Activated T-helper 1 cell treated with anti-CD3 and anti-CD28 coated beads, Interleukin-12 subunit alpha, Interleukin-12 subunit beta, Interleukin-2, Interleukin-4 antibody, amounts not matched to agents 30 ng/mL and 10 ng/mL and 1 ng/mL, durations not matched to agents 14 hours and 24 hours and 36 hours (primary cell): ENCODE measurements at regions of chr1 and their contacts with region 1.

Region 1: GRCh38 chr1:44730741-44731512 is at the start of gene RNU5D-1:
- DNase-seq: peak; percentile 87
- H3K4me3 Mint-ChIP-seq: peak within 1 kb of the TSS; percentile 60
- H3K27ac Mint-ChIP-seq: peak within 1 kb of the TSS; percentile 100
- H3K4me1 Mint-ChIP-seq: peaks cover 35% of the 10 kb centered on the region
- H3K27me3 Mint-ChIP-seq: peaks cover 3% of the 10 kb centered on the region
- total RNA-seq, gene RNU5D-1: not detected in 2 replicates

Region 2: GRCh38 chr1:44707959-44708831 is 22.7 kb before region 1 on chr1:
- intact Hi-C with region 1: loop called (anchors 1 kb)
- DNase-seq: no peak
- H3K4me3 Mint-ChIP-seq: peak overlapping the region; percentile 55
- H3K27ac Mint-ChIP-seq: peak overlapping the region; percentile 27
- H3K4me1 Mint-ChIP-seq: peaks cover 15% of the 10 kb centered on the region
- H3K27me3 Mint-ChIP-seq: peaks cover 10% of the 10 kb centered on the region

Region 3: DNA sequence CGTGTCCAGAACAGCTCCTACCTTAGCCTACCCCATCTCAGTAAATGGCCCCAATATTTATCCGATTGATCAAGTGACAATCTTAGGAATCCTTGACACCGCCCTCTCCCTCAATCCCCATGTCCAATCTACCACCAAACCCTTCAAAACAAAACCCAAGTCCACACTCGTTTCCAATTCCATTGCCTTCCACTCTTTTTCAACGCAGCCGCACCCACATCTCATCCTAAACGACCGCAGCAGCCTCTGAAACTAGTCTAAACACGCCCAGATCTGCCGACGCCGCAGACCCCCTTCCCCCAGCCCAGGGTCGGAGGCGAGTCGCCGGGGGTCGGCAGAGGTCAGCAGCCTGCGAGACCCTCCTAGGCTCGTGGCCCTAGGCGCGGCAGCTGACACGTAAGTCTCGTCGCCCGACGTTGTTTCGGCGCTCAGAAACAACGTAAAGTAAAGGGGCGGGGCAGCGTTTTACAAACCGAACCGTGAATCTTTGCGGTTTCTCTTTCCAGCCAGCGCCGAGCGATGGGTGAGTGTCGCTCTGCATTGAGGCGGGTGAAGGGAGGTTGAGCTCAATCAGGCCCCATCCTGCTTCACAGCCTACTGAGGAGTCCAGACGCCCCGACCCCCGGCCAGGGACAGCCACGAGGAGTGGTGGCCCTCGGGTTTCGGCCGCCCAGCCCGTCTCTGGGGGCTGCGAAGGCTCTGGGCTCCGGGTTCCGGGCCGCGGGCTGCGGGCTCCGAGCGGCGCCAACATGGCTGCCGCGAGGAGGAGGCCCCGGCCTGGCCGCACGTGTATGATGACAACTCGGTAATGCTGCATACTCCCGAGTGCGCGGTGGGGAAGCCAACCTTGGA is 44.4 kb after region 1 on chr1 and contains the start of gene RPS8:
- intact Hi-C with region 1: loop called (anchors 1 kb)
- DNase-seq: peak; percentile 85
- H3K4me3 Mint-ChIP-seq: peak within 1 kb of the TSS; percentile 88
- H3K27ac Mint-ChIP-seq: peak within 1 kb of the TSS; percentile 93
- H3K4me1 Mint-ChIP-seq: peaks cover 23% of the 10 kb centered on the region
- H3K27me3 Mint-ChIP-seq: no peaks in the 10 kb centered on the region
- total RNA-seq, gene RPS8: 2,172 and 2,226 TPM in 2 replicates

Region 4: DNA sequence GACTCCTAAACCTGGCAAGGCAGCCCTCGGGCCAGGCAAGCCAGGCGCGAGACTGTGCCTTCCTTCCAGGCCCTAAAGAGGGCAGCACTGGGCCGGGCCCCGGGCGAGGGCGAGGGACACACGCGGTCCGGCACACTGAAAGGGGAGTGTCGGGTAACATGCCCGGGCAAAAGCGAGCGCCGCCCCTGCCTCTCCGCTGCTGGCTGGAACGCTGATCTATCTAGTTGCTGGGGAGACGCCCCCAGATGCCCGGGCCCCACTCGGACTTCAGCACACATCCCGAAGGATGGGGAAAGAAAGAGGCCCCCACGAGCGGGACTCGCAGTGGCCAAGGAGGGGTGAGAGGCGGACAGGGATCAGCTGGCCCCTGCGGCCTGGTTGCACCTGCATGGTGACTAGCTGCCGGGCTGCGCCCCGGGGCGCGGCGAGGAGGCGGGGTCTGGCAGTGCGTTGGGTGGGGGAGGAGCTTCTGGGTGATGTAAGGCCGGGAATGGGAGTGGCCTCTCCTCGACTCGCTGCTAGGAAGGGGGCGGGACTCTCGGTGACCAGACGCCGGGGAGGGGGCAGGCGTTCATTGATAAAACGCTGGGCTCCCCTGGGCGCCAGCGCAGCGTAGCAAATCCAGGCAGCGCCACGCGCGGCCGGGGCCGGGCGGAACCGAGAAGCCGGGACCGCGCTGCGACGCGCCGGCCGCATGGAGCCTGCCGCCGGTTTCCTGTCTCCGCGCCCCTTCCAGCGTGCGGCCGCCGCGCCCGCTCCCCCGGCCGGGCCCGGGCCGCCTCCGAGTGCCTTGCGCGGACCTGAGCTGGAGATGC is 69.0 kb after region 1 on chr1 and contains the start of gene PLK3:
- intact Hi-C with region 1: loop called (anchors 2 kb)
- DNase-seq: peak; percentile 97
- H3K4me3 Mint-ChIP-seq: peak within 1 kb of the TSS; percentile 97
- H3K27ac Mint-ChIP-seq: peak within 1 kb of the TSS; percentile 99
- H3K4me1 Mint-ChIP-seq: peaks cover 35% of the 10 kb centered on the region
- H3K27me3 Mint-ChIP-seq: no peaks in the 10 kb centered on the region
- total RNA-seq, gene PLK3: 208 and 211 TPM in 2 replicates

Region 5: GRCh38 chr1:44819608-44820327 is 88.8 kb after region 1 on chr1:
- intact Hi-C with region 1: loop called (anchors 1 kb)
- DNase-seq: peak; percentile 81
- H3K4me3 Mint-ChIP-seq: peak overlapping the region; percentile 87
- H3K27ac Mint-ChIP-seq: peak overlapping the region; percentile 97
- H3K4me1 Mint-ChIP-seq: peaks cover 54% of the 10 kb centered on the region
- H3K27me3 Mint-ChIP-seq: no peaks in the 10 kb centered on the region